ENCODE measurements at regions of chr1 and their contacts with region 1.

Region 1: DNA sequence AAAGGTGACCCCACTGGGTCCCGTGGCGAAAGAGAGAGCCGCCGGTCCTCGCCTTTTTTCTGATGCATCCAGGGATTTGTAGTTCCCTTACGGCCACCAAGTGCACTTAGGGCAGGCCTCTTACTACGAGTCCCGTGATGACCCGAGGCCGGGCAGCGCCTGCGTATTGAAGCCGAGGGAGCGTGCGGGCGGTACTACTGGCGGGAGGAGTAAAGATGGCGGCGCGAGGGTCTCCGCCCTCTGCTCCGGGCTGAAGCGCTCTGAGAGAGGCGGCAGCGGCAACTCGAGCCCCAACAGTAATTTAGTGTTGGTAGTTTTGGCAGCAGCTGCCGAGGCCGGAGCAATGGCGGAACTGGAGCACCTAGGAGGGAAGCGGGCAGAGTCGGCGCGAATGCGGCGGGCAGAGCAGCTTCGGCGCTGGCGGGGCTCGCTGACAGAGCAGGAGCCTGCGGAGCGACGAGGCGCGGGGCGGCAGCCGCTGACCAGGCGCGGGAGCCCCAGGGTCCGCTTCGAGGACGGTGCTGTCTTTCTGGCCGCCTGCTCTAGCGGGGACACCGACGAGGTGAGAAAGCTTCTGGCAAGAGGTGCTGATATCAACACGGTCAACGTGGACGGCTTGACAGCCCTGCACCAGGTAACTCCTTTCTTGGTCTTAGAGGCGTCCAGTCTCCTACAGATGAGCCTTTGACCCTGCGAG is at the start of gene PPP1R12B:
- DNase-seq: peak; percentile 95
- H3K4me3 Mint-ChIP-seq: peak within 1 kb of the TSS; percentile 98
- H3K27ac Mint-ChIP-seq: peak within 1 kb of the TSS; percentile 94
- H3K4me1 Mint-ChIP-seq: peaks cover 25% of the 10 kb centered on the region
- H3K27me3 Mint-ChIP-seq: no peaks in the 10 kb centered on the region
- total RNA-seq, gene PPP1R12B: 13.5 and 15.4 TPM in 2 replicates

Region 2: GRCh38 chr1:202376247-202376646 is 27.6 kb after region 1 on chr1:
- intact Hi-C with region 1: loop called (anchors 2 kb)
- DNase-seq: no peak
- H3K4me3 Mint-ChIP-seq: no peak overlapping the region
- H3K27ac Mint-ChIP-seq: no peak overlapping the region
- H3K4me1 Mint-ChIP-seq: peaks cover 18% of the 10 kb centered on the region
- H3K27me3 Mint-ChIP-seq: peaks cover 11% of the 10 kb centered on the region

Region 3: DNA sequence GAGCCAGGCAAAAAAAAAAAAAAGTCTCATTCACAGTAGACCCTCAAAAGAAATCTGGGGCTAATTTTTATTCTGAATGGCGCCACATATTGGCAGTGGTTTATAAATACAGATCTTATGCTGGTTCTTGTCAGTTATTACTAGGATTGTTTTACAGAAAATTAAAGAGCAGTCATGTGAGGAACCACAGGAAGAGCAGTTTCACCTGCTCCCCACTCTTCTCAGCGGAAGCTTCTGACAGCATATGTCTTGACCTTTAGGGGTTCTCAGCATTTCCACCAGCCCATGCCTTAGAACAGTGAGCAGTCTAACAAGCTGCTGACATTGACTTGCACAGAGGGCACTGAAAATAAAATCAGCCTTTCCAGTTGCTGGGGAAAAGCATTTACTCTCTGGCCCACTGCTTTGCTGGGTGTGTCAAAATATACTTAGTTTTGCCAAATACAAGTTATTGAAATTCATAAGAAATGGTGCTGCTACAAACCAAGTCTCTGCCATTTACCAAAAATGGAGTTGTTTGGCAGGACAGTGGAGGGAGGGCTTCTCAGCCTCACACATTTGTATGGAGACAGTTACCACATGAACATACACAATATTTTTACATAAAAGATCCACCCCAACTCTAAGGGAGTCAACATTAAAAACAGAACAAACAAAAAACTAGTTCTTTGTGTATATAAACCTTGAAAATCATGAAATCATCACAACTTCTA is 217.4 kb after region 1 on chr1:
- intact Hi-C with region 1: loop called (anchors 5 kb)
- DNase-seq: no peak
- H3K4me3 Mint-ChIP-seq: no peak overlapping the region
- H3K27ac Mint-ChIP-seq: no peak overlapping the region
- H3K4me1 Mint-ChIP-seq: peaks cover 31% of the 10 kb centered on the region
- H3K27me3 Mint-ChIP-seq: no peaks in the 10 kb centered on the region

Region 4: GRCh38 chr1:202713110-202713509 is 364.5 kb after region 1 on chr1:
- intact Hi-C with region 1: loop called (anchors 2 kb)
- DNase-seq: no peak
- H3K4me3 Mint-ChIP-seq: no peak overlapping the region
- H3K27ac Mint-ChIP-seq: no peak overlapping the region
- H3K4me1 Mint-ChIP-seq: no peaks in the 10 kb centered on the region
- H3K27me3 Mint-ChIP-seq: peaks cover 61% of the 10 kb centered on the region

Region 5: DNA sequence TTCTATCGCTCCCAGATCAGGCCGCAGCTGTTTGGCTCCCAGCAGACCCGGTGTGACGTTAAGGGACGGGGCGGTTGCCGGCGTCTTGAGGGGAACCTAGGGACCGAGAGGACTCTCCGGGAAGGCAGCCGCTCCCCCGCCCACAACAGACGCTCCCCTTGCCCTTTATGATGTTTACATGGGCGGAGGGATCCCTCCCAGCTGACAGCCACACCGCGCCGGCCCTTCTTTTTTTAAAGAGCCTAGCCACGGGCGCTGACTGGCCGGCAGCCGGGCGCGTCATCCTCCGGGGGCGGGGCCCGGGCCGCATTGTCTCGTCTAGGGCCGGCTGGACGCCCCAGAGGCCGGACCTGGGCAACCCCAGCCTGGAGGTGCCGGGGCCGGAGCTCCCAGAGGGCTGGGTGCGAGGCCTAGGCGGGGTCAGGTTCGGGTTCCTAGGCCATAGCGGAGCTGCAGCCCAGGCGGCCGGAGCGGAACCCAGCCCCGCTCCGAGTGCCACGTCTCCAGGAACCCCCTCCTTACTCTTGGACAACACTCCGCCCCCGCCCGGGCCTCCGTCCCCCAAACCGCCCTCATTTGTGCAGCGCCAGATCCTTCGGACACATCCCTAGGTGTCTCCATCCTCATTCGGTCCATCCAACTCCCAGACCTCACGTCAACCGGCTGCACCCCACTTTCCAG is 462.1 kb after region 1 on chr1 and contains the start of gene PCAT6:
- intact Hi-C with region 1: loop called (anchors 10 kb)
- DNase-seq: peak; percentile 85
- H3K4me3 Mint-ChIP-seq: peak within 1 kb of the TSS; percentile 92
- H3K27ac Mint-ChIP-seq: peak within 1 kb of the TSS; percentile 80
- H3K4me1 Mint-ChIP-seq: peaks cover 35% of the 10 kb centered on the region
- H3K27me3 Mint-ChIP-seq: peaks cover 20% of the 10 kb centered on the region
- total RNA-seq, gene PCAT6: 1.6 TPM in 2 replicates

Region 6: DNA sequence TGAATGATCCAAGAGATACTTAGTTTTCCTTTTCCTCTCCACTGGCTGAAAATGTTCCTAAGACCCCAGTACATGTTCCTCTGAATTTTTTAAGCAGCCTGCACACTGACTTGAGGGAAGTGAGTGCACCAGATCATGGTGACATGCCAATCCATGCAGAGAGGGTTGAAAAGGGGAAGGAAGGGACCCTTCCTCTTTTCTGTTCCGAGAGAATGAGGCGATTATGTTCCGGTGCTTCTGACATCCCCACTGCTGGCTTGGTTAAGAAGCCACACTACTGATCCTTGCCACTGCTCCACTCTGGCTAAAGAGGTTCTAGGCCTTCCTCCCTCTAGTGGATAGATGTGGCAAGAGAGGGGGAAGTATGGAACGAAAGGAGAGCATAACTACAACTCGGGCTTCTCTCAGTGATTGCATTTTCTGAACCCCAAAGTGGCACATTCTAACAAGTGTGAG is 620.2 kb after region 1 on chr1:
- intact Hi-C with region 1: loop called (anchors 5 kb)
- DNase-seq: peak; percentile 26
- H3K4me3 Mint-ChIP-seq: peak overlapping the region; percentile 41
- H3K27ac Mint-ChIP-seq: no peak overlapping the region
- H3K4me1 Mint-ChIP-seq: peaks cover 20% of the 10 kb centered on the region
- H3K27me3 Mint-ChIP-seq: peaks cover 14% of the 10 kb centered on the region